ENCODE measurements at regions of chr6 and their contacts with region 1.

Region 1: GRCh38 chr6:71383901-71384489 is 95.4 kb downstream of the OGFRL1 start:
- DNase-seq: no peak
- H3K4me3 ChIP-seq: no peak overlapping the region
- H3K27ac ChIP-seq: peak overlapping the region in 11 of 59 donors; percentile 4 to 64 (median 29)
- H3K27me3 ChIP-seq: no peaks in the 10 kb centered on the region
- CTCF ChIP-seq: peak; percentile 67 to 97 (median 82)

Region 2: DNA sequence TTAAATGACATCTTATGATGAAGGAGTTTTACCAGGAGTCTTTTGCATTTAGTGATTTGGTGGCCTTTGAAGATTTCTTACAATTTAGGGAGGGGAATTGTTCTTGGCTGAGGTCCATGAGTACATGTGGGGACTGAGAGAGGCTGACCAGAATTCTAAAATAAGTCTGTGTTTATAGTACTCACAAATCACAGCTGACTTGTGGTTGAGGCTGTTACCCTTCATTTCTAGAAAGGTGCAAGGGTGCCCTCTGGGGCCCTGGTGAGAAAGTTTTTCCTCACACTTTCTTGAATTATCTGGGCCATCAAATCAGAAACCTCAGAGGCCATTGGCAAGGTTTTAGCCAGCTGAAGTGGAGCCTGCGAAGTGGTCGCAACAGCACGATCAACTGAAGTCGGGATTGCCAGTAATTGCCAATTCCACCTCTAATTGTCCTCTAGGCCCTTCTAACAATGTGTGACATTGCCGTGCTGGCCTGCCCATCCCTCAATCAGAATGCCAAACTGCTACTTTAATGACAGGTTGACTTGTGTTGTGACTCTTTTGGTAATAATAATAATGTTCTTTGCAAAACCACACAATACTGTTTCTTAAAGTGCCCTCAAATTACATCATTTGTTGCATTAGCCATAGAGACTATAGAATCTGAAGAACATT is 126.2 kb after region 1 on chr6:
- intact Hi-C with region 1: loop called (anchors 5 to 10 kb)
- DNase-seq: peak in 7 of 10 donors; percentile 3 to 44 (median 36)
- H3K4me3 ChIP-seq: no peak overlapping the region
- H3K27ac ChIP-seq: peak overlapping the region in 14 of 59 donors; percentile 0 to 62 (median 40)
- H3K27me3 ChIP-seq: peaks cover 0 to 3% (median 0%) of the 10 kb centered on the region in 45 donors
- CTCF ChIP-seq: peak; percentile 40 to 80 (median 62)

Region 3: GRCh38 chr6:71929047-71929446 is 545.1 kb after region 1 on chr6:
- intact Hi-C with region 1: no loop called
- DNase-seq: no peak
- H3K4me3 ChIP-seq: no peak overlapping the region
- H3K27ac ChIP-seq: no peak overlapping the region
- H3K27me3 ChIP-seq: no peaks in the 10 kb centered on the region
- CTCF ChIP-seq: no peak

Measured in dorsolateral prefrontal cortex (tissue), 120 donors.